OCI-LY7 (cell line): ENCODE measurements at regions of chr2 and their contacts with region 1.

Region 1: DNA sequence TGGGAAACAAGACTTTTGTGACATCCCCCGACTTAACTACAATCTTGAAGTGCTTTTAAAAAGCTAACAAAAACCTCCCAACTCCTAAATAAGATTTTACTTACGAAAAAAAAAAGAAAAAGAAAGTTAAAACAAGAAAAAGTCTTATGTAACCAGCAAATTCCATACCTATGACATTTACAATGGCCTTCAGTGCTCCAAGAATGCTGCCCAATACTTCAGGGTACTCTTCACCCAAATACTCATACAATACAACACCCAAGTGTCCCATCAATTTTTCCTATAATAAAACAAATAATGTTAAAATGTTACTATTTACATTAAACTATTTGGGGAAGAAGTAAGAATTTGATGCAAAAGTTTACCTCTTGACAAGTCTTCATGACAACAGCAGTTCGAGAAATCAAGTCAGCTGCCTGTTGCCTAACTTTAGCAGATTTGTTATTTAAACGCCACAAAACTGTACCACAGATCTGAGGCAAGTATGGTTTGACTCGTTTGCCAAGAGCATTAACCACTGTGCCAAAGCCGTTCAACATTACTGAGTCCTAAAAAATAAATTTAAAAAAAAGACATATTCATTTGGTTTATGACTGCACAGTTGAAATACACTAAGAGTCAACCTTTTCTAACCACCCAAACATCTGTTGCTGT is 34.8 kb downstream of the SF3B1 start:
- DNase-seq: no peak
- H3K4me3 ChIP-seq: no peak overlapping the region
- H3K27ac ChIP-seq: no peak overlapping the region
- H3K4me1 ChIP-seq: no peaks in the 10 kb centered on the region
- CTCF ChIP-seq: no peak

Region 2: DNA sequence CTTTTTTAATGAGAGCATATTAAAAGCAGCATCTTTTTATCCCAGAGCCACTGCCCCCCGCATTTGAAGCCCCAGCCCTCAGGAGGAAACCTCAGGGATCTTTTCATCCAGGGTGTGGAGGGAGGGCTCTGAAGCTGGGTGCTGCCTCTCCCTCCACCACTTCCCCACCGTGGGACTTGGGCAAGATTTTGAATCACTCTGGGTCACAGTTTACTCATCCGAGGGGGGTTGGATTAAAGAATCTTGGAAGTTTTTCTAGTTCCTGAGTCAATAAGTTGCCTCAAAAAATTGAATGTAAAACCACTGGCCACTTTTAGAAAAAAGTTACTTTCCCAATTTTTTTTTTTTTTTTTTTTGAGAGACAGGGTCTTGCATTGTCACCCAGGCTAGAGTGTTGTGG is 27.4 kb before region 1 on chr2:
- CTCF ChIA-PET with region 1: no interaction called
- POLR2A ChIA-PET with region 1: no interaction called
- intact Hi-C with region 1: no loop called
- DNase-seq: no peak
- H3K4me3 ChIP-seq: no peak overlapping the region
- H3K27ac ChIP-seq: no peak overlapping the region
- H3K4me1 ChIP-seq: peaks cover 4% of the 10 kb centered on the region
- CTCF ChIP-seq: no peak

Region 3: GRCh38 chr2:197414515-197414914 is 14.5 kb after region 1 on chr2:
- CTCF ChIA-PET with region 1: no interaction called
- POLR2A ChIA-PET with region 1: interaction called, 10 read pairs
- intact Hi-C with region 1: no loop called
- DNase-seq: no peak
- H3K4me3 ChIP-seq: no peak overlapping the region
- H3K27ac ChIP-seq: no peak overlapping the region
- H3K4me1 ChIP-seq: no peaks in the 10 kb centered on the region
- CTCF ChIP-seq: no peak

Region 4: DNA sequence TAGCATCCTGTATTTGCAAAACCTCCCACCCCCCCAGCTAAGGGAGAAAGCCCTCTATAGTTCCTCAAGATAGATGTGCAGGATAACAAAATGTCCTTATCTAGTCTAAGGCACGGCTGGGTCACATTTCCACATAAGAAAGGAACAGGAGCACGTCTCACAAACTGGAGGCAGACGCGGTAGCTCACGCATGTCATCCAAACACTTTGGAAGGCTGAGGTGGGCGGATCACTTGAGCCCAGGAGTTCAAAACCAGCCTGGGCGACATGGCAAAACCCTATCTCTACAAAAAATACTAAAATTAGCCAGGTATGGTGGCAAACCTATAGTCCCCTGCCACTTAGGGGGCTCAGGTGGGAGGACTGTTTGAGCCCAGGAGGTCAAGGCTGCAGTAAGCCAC is 25.5 kb after region 1 on chr2:
- CTCF ChIA-PET with region 1: no interaction called
- POLR2A ChIA-PET with region 1: no interaction called
- intact Hi-C with region 1: loop called (anchors 2 kb)
- DNase-seq: no peak
- H3K4me3 ChIP-seq: no peak overlapping the region
- H3K27ac ChIP-seq: no peak overlapping the region
- H3K4me1 ChIP-seq: peaks cover 24% of the 10 kb centered on the region
- CTCF ChIP-seq: no peak

Region 5: DNA sequence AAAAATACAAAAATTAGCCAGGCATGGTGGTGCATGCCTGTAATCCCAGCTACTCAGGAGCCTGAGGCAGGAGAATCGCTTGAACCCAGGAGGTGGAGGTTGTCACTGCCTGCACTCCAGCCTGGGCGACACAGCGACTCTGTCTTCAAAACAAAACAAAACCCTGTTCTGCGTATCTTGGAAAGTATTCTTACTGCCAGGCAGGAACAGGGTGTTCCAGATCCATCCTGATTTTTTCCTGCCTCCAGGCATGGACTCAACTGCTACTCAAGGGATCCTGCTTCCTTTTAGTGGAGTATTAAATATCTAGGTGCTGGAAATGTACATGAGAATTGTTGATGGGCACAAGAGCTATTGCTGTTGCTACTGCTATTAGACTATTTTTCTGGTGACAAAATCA is 87.4 kb after region 1 on chr2:
- CTCF ChIA-PET with region 1: no interaction called
- POLR2A ChIA-PET with region 1: no interaction called
- intact Hi-C with region 1: loop called (anchors 5 kb)
- DNase-seq: no peak
- H3K4me3 ChIP-seq: no peak overlapping the region
- H3K27ac ChIP-seq: no peak overlapping the region
- H3K4me1 ChIP-seq: no peaks in the 10 kb centered on the region
- CTCF ChIP-seq: no peak